Activated B cell treated with CpG ODN at 0.5 μM for 24 hours (primary cell): ENCODE measurements at regions of chr12 and their contacts with region 1.

Region 1: DNA sequence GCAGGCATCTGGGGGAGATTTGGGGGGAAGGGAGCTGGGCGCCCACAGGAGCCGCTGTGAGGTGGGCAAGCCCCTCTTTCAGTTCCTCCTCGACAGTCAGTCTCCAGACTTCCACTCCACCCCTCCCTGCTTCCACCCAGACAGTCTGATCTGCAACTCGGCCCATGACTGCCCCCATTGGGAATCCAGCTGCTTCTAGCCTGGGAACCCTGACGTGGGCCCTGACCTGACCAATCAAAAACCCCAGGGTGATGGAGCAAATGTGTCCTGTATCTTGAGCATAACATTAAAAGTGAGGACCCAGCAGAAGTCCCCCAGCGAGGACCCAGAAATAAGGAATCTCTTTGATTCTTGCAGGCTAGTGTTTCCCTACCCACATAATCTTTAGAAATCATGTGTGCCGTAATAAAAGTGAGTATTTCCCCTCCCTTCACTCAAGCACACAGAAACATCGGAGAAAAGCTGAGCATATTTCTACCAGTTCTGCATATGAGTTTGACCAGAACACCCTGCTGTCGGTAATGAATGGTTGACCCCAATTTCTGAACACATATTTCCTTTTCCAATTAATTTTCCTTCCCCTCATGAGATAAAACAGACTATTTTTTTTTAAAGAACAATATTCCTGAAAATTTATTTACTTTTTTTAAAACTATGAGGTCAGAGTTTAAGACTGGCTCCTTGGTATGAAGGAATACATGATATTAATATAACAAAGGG is 6.4 kb downstream of the SSH1 start:
- DNase-seq: peak; percentile 32
- ATAC-seq: peak; percentile 91
- H3K4me3 Mint-ChIP-seq: peak overlapping the region; percentile 28
- H3K27ac Mint-ChIP-seq: peak overlapping the region; percentile 72
- H3K4me1 Mint-ChIP-seq: peaks cover 27% of the 10 kb centered on the region
- H3K27me3 Mint-ChIP-seq: no peaks in the 10 kb centered on the region
- CTCF ChIP-seq: no peak

Region 2: DNA sequence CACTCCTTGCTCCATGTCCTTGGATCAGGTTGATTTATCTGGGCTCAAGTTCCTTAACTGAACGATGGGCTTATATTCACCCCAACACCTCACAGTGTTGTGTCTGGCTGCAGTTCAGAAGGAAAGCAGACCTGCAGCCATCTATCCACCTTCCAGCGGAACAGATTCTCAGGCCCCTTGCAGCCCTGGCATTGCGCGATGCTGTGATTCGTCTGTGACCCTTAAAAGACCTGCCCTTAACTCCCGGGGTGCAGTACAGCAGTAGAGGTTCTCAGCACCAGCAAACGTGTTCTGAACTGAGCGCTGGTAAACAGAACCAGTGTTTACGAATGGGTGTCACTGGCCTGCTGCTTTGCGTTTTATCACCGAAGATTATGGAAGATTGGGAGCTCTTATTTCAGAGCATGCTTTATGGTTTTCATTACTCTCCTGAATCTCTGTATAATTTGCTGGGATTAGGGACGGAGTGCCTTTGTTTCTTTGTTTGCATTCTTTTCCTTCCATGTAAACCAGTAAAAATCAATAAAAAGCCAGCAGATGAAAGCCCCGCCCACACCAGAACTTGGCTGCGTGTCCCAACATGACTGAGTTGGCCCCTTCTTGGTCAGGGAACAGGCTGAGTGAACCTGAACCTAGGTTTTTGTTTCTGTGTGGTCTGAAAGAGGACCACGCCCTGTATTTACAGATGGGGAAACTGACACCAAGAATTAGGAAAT is 1471.0 kb before region 1 on chr12:
- CTCF ChIA-PET with region 1: no interaction called
- POLR2A ChIA-PET with region 1: no interaction called
- intact Hi-C with region 1: no loop called
- DNase-seq: no peak
- ATAC-seq: no peak
- H3K4me3 Mint-ChIP-seq: no peak overlapping the region
- H3K27ac Mint-ChIP-seq: no peak overlapping the region
- H3K4me1 Mint-ChIP-seq: no peaks in the 10 kb centered on the region
- H3K27me3 Mint-ChIP-seq: no peaks in the 10 kb centered on the region
- CTCF ChIP-seq: no peak

Region 3: GRCh38 chr12:108838194-108839017 is 12.6 kb before region 1 on chr12:
- CTCF ChIA-PET with region 1: no interaction called
- POLR2A ChIA-PET with region 1: interaction called, 13 read pairs
- intact Hi-C with region 1: no loop called
- DNase-seq: no peak
- ATAC-seq: peak; percentile 95
- H3K4me3 Mint-ChIP-seq: peak overlapping the region; percentile 9
- H3K27ac Mint-ChIP-seq: peak overlapping the region; percentile 79
- H3K4me1 Mint-ChIP-seq: peaks cover 17% of the 10 kb centered on the region
- H3K27me3 Mint-ChIP-seq: no peaks in the 10 kb centered on the region
- CTCF ChIP-seq: no peak

Region 4: GRCh38 chr12:108861878-108862587 is 11.0 kb after region 1 on chr12:
- CTCF ChIA-PET with region 1: no interaction called
- POLR2A ChIA-PET with region 1: interaction called, 22 read pairs
- intact Hi-C with region 1: no loop called
- DNase-seq: peak; percentile 44
- ATAC-seq: peak; percentile 47
- H3K4me3 Mint-ChIP-seq: no peak overlapping the region
- H3K27ac Mint-ChIP-seq: peak overlapping the region; percentile 27
- H3K4me1 Mint-ChIP-seq: peaks cover 42% of the 10 kb centered on the region
- H3K27me3 Mint-ChIP-seq: no peaks in the 10 kb centered on the region
- CTCF ChIP-seq: no peak